CD4-positive, alpha-beta T cell (primary cell): ENCODE measurements at regions of chr6 and their contacts with region 1.

Region 1: DNA sequence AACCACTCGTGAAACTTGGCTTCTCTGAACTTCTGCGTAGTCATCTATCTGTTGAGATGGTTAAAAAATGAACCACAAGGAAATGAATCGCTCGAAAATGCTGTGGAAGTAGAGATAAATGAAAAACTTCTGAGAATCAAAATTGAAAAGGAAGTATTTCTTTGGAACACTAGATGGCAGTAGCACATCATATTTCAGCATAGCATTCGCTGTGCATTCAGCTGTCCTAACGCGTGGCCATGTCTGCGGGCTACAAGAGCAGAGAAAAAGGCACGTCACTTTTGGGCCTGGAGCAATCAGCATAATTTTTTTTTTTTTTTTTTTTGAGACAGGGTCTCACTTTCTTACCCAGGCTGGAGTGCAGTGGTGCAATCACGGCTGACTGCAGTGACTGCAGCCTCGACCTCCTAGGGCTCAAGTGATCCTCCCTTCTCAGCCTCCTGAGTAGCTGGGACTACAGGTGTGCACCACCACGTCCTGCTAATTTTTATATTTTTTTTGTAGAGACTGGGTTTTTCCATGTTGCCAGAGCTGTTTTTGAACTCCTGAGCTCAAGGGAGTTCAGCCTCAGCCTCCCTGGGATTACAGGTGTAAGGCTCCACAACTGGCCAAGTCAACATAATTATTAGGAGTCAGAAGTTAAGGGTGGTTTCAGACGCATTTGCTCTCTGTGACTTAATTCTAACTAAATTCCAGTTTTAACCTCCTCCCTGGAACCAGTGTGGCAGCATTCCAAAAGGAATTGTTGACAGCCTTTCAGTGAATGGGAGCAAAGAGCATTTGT is 8.8 kb upstream of the PERP start:
- DNase-seq: peak in 11 of 14 experiments; percentile 13 to 83 (median 32)
- ATAC-seq: peak; percentile 91
- H3K4me3 ChIP-seq: no peak overlapping the region
- H3K4me3 Mint-ChIP-seq: no peak overlapping the region
- H3K27ac ChIP-seq: no peak overlapping the region
- H3K27ac Mint-ChIP-seq: no peak overlapping the region
- H3K4me1 ChIP-seq: no peaks in the 10 kb centered on the region
- H3K4me1 Mint-ChIP-seq: peaks cover 6% of the 10 kb centered on the region
- H3K27me3 ChIP-seq: no peaks in the 10 kb centered on the region
- H3K27me3 Mint-ChIP-seq: peaks cover 32% of the 10 kb centered on the region
- CTCF ChIP-seq: peak; percentile 90

Region 2: GRCh38 chr6:137248702-137249101 is 867.4 kb before region 1 on chr6:
- CTCF ChIA-PET with region 1: no interaction called
- POLR2A ChIA-PET with region 1: no interaction called
- intact Hi-C with region 1: no loop called
- DNase-seq: peak in 2 of 14 experiments; percentile 32 to 37
- ATAC-seq: no peak
- H3K4me3 ChIP-seq: no peak overlapping the region
- H3K4me3 Mint-ChIP-seq: no peak overlapping the region
- H3K27ac ChIP-seq: no peak overlapping the region
- H3K27ac Mint-ChIP-seq: no peak overlapping the region
- H3K4me1 ChIP-seq: no peaks in the 10 kb centered on the region
- H3K4me1 Mint-ChIP-seq: no peaks in the 10 kb centered on the region
- H3K27me3 ChIP-seq: no peaks in the 10 kb centered on the region
- H3K27me3 Mint-ChIP-seq: no peaks in the 10 kb centered on the region
- CTCF ChIP-seq: no peak

Region 3: DNA sequence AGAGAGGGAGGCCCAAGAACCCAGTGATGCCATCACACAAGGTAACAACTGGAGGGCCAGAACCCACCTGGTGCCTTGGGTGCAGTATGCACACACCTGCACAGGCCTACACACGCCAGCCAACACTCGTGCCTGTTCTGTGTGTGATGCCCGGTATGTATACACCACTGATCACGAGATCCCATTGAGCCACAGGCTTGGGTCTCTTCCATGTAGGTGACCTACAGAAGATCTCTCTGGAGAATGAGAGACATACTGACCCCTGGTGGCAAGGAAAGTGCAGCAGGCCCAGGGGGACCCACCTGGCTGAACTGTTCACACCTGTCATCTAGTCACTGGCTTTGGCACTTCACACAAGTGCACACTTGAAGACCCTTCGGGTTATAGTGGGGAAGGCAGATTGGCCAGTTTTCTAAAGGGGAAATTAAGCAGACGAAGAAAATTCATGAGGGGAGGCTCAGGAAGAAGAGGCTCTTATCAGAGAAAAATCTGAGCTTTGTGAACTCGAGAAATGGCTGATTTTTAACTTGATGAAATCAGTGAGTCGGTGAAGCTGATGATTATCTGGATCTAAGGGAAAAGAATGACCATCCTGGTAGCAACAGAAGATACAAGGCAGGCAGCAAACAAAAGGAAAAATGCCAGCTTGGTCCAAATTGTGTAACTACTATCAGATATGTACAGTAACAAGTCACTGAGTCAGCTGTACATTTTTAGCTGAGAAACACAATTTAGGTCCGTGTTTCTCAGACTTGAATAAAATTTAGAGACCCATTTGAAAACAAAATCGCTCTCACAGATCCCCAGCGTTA is 171.3 kb after region 1 on chr6:
- CTCF ChIA-PET with region 1: interaction called, 3 read pairs
- POLR2A ChIA-PET with region 1: no interaction called
- intact Hi-C with region 1: loop called (anchors 1 kb)
- DNase-seq: peak in 12 of 14 experiments; percentile 8 to 65 (median 34)
- ATAC-seq: no peak
- H3K4me3 ChIP-seq: no peak overlapping the region
- H3K4me3 Mint-ChIP-seq: no peak overlapping the region
- H3K27ac ChIP-seq: no peak overlapping the region
- H3K27ac Mint-ChIP-seq: no peak overlapping the region
- H3K4me1 ChIP-seq: no peaks in the 10 kb centered on the region
- H3K4me1 Mint-ChIP-seq: no peaks in the 10 kb centered on the region
- H3K27me3 ChIP-seq: no peaks in the 10 kb centered on the region
- H3K27me3 Mint-ChIP-seq: peaks cover 3% of the 10 kb centered on the region
- CTCF ChIP-seq: peak; percentile 57

Region 4: GRCh38 chr6:138428944-138429598 is 313.0 kb after region 1 on chr6:
- CTCF ChIA-PET with region 1: no interaction called
- POLR2A ChIA-PET with region 1: no interaction called
- intact Hi-C with region 1: loop called in 1 of 2 experiments (anchors 5 kb)
- DNase-seq: peak in 4 of 14 experiments; percentile 36 to 71 (median 66)
- ATAC-seq: peak; percentile 58
- H3K4me3 ChIP-seq: no peak overlapping the region
- H3K4me3 Mint-ChIP-seq: no peak overlapping the region
- H3K27ac ChIP-seq: no peak overlapping the region
- H3K27ac Mint-ChIP-seq: no peak overlapping the region
- H3K4me1 ChIP-seq: peaks cover 3% of the 10 kb centered on the region
- H3K4me1 Mint-ChIP-seq: peaks cover 6% of the 10 kb centered on the region
- H3K27me3 ChIP-seq: no peaks in the 10 kb centered on the region
- H3K27me3 Mint-ChIP-seq: no peaks in the 10 kb centered on the region
- CTCF ChIP-seq: peak; percentile 86

Region 5: GRCh38 chr6:138588805-138589434 is 472.9 kb after region 1 on chr6:
- CTCF ChIA-PET with region 1: no interaction called
- POLR2A ChIA-PET with region 1: interaction called, 3 read pairs
- intact Hi-C with region 1: loop called (anchors 2 to 5 kb)
- DNase-seq: peak; percentile 9 to 80 (median 28)
- ATAC-seq: peak; percentile 39
- H3K4me3 ChIP-seq: no peak overlapping the region
- H3K4me3 Mint-ChIP-seq: no peak overlapping the region
- H3K27ac ChIP-seq: no peak overlapping the region
- H3K27ac Mint-ChIP-seq: no peak overlapping the region
- H3K4me1 ChIP-seq: peaks cover 6% of the 10 kb centered on the region
- H3K4me1 Mint-ChIP-seq: peaks cover 20% of the 10 kb centered on the region
- H3K27me3 ChIP-seq: no peaks in the 10 kb centered on the region
- H3K27me3 Mint-ChIP-seq: no peaks in the 10 kb centered on the region
- CTCF ChIP-seq: peak; percentile 96